ENCODE measurements at regions of chr18 and their contacts with region 1.

Region 1: DNA sequence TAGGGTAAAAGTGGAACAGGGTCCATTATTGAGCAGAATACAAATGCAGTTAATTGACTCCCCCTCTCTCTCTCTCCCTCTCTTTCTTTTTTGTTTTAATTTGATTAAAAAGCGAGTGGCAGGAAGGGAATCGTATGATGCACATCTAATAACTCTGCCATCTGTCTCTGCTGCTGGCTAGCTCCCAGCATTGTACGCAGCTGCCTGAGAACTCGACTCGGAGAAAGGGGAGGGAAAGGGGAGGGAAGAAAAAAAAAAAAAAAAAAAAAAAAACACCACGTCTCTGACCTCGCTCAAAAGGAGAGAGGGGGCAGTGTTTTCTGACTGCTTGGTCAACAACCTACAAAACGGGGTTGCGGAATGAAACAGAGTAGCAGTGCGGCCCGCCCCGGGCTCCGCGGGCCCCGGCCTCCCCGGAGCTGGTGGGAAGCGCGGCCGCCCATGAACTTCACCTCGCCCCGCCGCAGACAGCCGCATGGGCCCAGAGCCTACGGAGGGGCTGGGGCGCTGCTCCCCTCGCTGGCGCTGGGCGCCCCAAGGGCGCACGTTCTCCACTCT is 265.7 kb downstream of the TCF4 start:
- DNase-seq: peak; percentile 71
- ATAC-seq: peak; percentile 84
- H3K4me3 Mint-ChIP-seq: peak overlapping the region; percentile 84
- H3K27ac Mint-ChIP-seq: no peak overlapping the region
- H3K4me1 Mint-ChIP-seq: peaks cover 70% of the 10 kb centered on the region
- H3K27me3 Mint-ChIP-seq: no peaks in the 10 kb centered on the region
- CTCF ChIP-seq: no peak

Region 2: DNA sequence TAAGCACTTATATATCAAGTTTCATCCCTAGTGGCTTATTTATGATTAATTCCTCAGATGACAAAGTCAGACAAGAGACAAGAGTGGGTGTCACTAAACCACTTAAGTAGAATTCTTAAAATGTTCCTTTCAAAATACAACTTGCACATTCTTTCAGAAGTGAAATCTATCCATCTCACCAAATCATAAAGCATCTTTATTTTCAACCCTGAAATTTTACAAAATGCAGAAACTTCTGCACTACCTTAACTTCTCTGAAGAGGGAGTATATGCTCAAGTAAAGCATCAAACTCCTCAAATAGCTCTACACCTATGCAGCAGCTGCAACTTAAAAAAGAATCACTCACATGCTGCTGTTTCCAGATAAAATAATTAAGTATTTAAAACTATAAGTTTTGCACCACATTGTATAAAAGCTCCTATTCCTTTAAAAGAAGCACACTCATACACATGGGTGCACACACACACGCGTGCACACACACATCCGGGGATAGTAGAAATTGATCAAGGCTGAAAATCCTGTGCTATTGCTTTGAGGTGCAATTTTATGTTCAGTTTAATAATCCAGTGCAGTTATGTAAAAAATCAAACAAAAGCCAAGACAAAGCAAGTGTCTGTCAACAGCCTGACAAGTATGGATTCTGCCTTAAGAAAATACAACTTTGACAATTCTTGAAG is 21.3 kb after region 1 on chr18:
- CTCF ChIA-PET with region 1: interaction called, 13 read pairs
- POLR2A ChIA-PET with region 1: no interaction called
- DNase-seq: no peak
- ATAC-seq: peak; percentile 54
- H3K4me3 Mint-ChIP-seq: no peak overlapping the region
- H3K27ac Mint-ChIP-seq: no peak overlapping the region
- H3K4me1 Mint-ChIP-seq: peaks cover 74% of the 10 kb centered on the region
- H3K27me3 Mint-ChIP-seq: no peaks in the 10 kb centered on the region
- CTCF ChIP-seq: peak; percentile 39; the same call in 1 of the 2 replicates

Measured in WTC11 (cell line).